ENCODE measurements at regions of chr12 and their contacts with region 1.

Region 1: GRCh38 chr12:39872425-39872824 is 233.5 kb downstream of the SLC2A13 start:
- DNase-seq: no peak
- H3K4me3 ChIP-seq: no peak overlapping the region
- H3K27ac ChIP-seq: no peak overlapping the region
- H3K4me1 ChIP-seq: no peaks in the 10 kb centered on the region
- H3K27me3 ChIP-seq: no peaks in the 10 kb centered on the region
- CTCF ChIP-seq: no peak
- EP300 ChIP-seq: no peak
- POLR2A ChIP-seq: no peak

Region 2: DNA sequence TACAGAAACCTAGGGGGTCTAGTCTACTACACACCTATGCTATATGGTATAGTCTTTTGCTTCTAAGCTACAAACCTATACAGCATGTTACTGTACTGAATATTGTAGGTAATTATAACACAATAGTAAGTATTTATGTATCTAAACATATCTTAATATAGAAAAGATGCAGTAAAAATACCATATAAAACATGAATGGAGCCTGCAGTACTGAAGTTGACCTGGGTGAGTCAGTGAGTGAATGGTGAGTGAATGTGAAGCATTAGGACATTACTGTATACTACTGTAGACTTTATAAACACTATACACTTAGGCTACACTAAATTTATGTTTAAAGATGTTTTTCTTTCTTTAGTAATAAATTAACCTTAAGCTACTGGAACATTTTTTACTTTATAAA is 239.8 kb before region 1 on chr12:
- intact Hi-C with region 1: no loop called
- DNase-seq: no peak
- H3K4me3 ChIP-seq: no peak overlapping the region
- H3K27ac ChIP-seq: no peak overlapping the region
- H3K4me1 ChIP-seq: no peaks in the 10 kb centered on the region
- H3K27me3 ChIP-seq: no peaks in the 10 kb centered on the region
- CTCF ChIP-seq: no peak
- EP300 ChIP-seq: no peak
- POLR2A ChIP-seq: no peak

Region 3: GRCh38 chr12:39883411-39883810 is 11.0 kb after region 1 on chr12:
- intact Hi-C with region 1: loop called in 1 of 4 experiments (anchors 1 kb)
- DNase-seq: no peak
- H3K4me3 ChIP-seq: no peak overlapping the region
- H3K27ac ChIP-seq: no peak overlapping the region
- H3K4me1 ChIP-seq: no peaks in the 10 kb centered on the region
- H3K27me3 ChIP-seq: no peaks in the 10 kb centered on the region
- CTCF ChIP-seq: no peak
- EP300 ChIP-seq: no peak
- POLR2A ChIP-seq: no peak

Measured in ovary (tissue), 10 donors.